Stomach (tissue), 19 donors: ENCODE measurements at regions of chr17 and their contacts with region 1.

Region 1: DNA sequence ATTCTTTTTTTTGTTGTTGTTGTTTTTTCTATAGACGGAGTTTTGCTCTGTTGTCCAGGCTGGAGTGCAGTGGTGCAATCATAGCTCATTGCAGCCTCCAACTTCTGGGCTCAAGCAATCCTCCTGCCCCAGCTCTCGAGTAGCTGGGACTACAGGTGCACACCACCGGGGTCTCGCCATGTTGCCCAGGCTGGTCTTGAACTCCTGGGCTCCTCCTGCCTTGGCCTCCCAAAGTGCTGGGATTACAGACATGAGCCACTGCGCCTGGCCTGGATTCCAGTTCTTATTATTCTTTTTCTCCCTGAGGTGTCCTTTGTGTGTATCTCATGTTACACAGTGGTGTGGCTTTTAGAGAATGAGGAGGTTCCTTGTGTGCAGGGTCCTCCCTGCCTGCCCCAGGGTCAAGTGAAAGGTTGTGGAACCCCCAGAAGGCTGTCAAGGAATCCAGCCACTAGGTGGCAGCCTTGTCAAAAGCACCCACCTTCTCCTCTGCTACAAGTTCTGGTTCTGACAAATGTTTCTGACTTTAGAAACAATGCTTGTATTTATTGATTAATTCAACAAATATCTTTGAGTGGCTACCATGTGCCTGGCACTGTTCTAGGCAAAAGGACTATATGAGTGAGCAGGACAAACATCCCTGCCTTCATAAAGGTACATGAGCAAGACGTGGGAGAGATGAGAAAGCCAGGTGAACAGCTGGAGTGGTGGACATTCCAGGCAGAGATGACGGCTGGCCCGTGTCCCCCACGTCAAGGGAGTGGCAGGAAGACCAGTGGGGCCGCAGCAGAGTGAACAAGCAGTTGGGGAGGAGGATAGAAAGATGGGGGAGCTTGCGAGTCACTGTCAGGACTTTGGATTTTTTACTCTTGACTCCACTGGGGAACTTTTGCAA is 112.4 kb downstream of the SPECC1 start:
- DNase-seq: peak; percentile 73 to 81
- H3K4me3 ChIP-seq: no peak overlapping the region
- H3K27ac ChIP-seq: no peak overlapping the region
- H3K4me1 ChIP-seq: peaks cover 0 to 13% (median 7%) of the 10 kb centered on the region in 4 donors
- H3K27me3 ChIP-seq: no peaks in the 10 kb centered on the region
- CTCF ChIP-seq: peak in 4 of 7 experiments; percentile 72 to 89 (median 80)
- EP300 ChIP-seq: no peak
- POLR2A ChIP-seq: no peak

Region 2: DNA sequence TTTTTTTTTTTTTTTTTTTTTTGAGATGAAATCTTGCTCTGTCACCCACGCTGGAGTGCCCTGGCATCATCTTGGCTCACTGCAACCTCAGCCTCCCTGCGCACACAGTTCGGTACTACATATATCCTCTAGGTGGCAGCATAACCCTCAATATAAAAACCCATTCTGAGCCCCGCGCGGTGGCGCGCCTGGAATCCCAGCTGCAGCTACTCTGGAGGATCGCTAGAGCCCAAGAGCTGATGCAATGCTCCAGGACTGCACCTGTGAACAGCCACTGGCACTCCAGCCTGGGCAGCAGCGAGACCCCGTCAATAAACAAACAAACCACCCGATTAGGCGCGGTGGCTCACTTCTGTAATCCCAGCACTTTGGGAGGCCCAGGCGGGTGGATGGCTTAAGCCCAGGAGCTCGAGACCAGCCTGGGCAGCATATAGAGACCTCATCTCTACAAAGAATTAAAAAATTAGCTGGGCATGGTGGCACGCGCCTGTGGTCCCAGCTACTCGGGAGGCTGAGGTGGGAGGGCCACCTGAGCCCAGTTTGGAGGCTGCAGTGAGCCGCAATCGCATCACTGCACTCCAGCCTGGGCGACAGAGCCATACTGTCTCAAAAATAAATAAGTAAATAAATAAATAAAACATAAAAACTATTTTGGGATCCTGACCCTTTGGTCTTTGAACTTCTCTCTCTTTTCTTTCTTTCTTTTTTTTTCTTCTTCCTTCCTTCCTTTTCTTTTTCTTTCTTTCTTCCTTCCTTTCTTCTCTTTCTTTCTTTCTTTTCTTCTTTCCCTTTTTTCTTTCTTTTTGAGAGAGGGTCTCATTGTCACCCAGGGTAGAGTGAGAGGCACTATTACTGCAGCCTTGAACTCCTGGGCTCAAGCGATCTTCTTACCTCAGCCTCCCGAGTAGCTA is 128.5 kb before region 1 on chr17:
- intact Hi-C with region 1: loop called (anchors 5 kb)
- DNase-seq: peak; percentile 93 to 95
- H3K4me3 ChIP-seq: no peak overlapping the region
- H3K27ac ChIP-seq: no peak overlapping the region
- H3K4me1 ChIP-seq: peaks cover 0 to 8% (median 5%) of the 10 kb centered on the region in 4 donors
- H3K27me3 ChIP-seq: peaks cover 0 to 11% (median 0%) of the 10 kb centered on the region in 3 donors
- CTCF ChIP-seq: peak in 6 of 7 experiments; percentile 12 to 85 (median 74)
- EP300 ChIP-seq: no peak
- POLR2A ChIP-seq: no peak

Region 3: GRCh38 chr17:20009302-20010098 is 112.1 kb before region 1 on chr17 and contains the start of gene SPECC1:
- intact Hi-C with region 1: loop called (anchors 5 kb)
- DNase-seq: peak; percentile 89 to 92
- H3K4me3 ChIP-seq: peak within 1 kb of the TSS; percentile 63 to 81 (median 70)
- H3K27ac ChIP-seq: peak within 1 kb of the TSS; percentile 21 to 80 (median 68)
- H3K4me1 ChIP-seq: peaks cover 9 to 23% (median 21%) of the 10 kb centered on the region in 4 donors
- H3K27me3 ChIP-seq: peaks cover 0 to 50% (median 10%) of the 10 kb centered on the region in 3 donors
- CTCF ChIP-seq: peak in 4 of 7 experiments; percentile 73 to 99 (median 98)
- EP300 ChIP-seq: no peak
- POLR2A ChIP-seq: no peak
- total RNA-seq, gene SPECC1: 29.2 to 161 (median 48.7) TPM

Region 4: GRCh38 chr17:20315821-20316220 is 194.2 kb after region 1 on chr17:
- intact Hi-C with region 1: loop called (anchors 5 kb)
- DNase-seq: no peak
- H3K4me3 ChIP-seq: no peak overlapping the region
- H3K27ac ChIP-seq: no peak overlapping the region
- H3K4me1 ChIP-seq: peaks cover 0 to 7% (median 6%) of the 10 kb centered on the region in 4 donors
- H3K27me3 ChIP-seq: peaks cover 0 to 4% (median 0%) of the 10 kb centered on the region in 3 donors
- CTCF ChIP-seq: no peak
- EP300 ChIP-seq: no peak
- POLR2A ChIP-seq: no peak